ENCODE measurements at regions of chr1 and their contacts with region 1.

Region 1: GRCh38 chr1:15430787-15431570 is 7.3 kb upstream of the CTRC start:
- DNase-seq: peak; percentile 93
- ATAC-seq: peak; percentile 93
- H3K4me3 Mint-ChIP-seq: no peak overlapping the region
- H3K27ac Mint-ChIP-seq: no peak overlapping the region
- H3K4me1 Mint-ChIP-seq: peaks cover 4% of the 10 kb centered on the region; the same call in 1 of the 2 replicates
- H3K27me3 Mint-ChIP-seq: no peaks in the 10 kb centered on the region
- CTCF ChIP-seq: peak; percentile 96

Region 2: GRCh38 chr1:15409388-15410222 is 21.4 kb before region 1 on chr1 and contains the start of gene EFHD2:
- CTCF ChIA-PET with region 1: interaction called, 10 read pairs
- POLR2A ChIA-PET with region 1: no interaction called
- DNase-seq: peak; percentile 77
- ATAC-seq: peak; percentile 88
- H3K4me3 Mint-ChIP-seq: peak within 1 kb of the TSS; percentile 80
- H3K27ac Mint-ChIP-seq: no peak within 1 kb of the TSS
- H3K4me1 Mint-ChIP-seq: peaks cover 24% of the 10 kb centered on the region
- H3K27me3 Mint-ChIP-seq: peaks cover 47% of the 10 kb centered on the region
- CTCF ChIP-seq: no peak
- total RNA-seq, gene EFHD2: 19.5 to 23.8 TPM (median 21.9 TPM) in 3 replicates

Region 3: DNA sequence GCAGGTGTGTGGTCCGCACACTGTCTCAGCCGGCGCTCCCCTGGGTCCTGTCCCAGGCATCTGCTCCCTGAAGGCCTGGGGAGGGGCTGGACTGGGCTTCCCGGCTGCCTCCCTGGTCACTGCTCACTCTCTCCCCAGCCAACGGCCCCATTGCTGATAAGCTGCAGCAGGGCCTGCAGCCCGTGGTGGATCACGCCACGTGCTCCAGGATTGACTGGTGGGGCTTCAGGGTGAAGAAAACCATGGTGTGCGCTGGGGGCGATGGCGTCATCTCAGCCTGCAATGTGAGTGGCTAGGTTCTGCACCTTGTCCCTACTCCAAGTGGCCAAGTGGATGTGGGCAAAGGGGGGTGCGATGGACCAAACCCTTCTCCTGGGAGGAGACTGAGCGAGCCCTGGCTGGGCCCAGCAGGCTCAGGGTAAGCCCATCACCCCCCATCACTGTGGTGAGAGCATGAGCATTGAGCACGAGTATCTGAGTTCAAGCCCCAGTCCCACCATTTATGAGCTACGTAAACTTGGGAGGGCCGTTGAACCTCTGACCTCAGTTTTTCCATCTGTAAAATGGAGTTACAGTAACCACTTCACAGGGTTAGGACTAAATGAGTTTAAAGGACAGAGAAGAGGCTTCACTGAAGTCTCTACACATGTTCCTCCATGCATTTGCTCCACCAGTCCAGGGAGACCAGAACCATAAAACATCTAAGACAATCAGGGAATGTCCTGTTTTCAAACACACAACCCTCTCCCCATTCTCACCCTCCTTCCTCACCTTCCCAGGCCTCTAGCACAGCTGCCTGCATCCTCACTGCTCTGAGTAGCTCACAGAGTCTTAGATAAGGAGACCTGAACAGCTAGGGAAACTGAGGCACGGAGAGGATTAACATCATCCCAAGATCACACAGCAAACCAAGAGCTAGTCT is 13.8 kb after region 1 on chr1:
- CTCF ChIA-PET with region 1: interaction called, 20 read pairs
- POLR2A ChIA-PET with region 1: no interaction called
- DNase-seq: no peak
- ATAC-seq: no peak
- H3K4me3 Mint-ChIP-seq: no peak overlapping the region
- H3K27ac Mint-ChIP-seq: no peak overlapping the region
- H3K4me1 Mint-ChIP-seq: no peaks in the 10 kb centered on the region
- H3K27me3 Mint-ChIP-seq: 0 out of 2 replicates have a peak, but pooled peaks cover 4% of the 10 kb centered on the region
- CTCF ChIP-seq: no peak